K562 (cell line): ENCODE measurements at regions of chr7 and their contacts with region 1.

Region 1: GRCh38 chr7:117146059-117146458 is 176.8 kb downstream of the WNT2 start:
- DNase-seq: peak in 1 of 4 experiments; percentile 17
- ATAC-seq: peak; percentile 51
- H3K4me3 ChIP-seq: no peak overlapping the region
- H3K27ac ChIP-seq: no peak overlapping the region
- H3K4me1 ChIP-seq: no peaks in the 10 kb centered on the region; a peak in 2 of 5 replicates
- H3K27me3 ChIP-seq: no peaks in the 10 kb centered on the region
- CTCF ChIP-seq: no peak
- EP300 ChIP-seq: no peak
- POLR2A ChIP-seq: no peak
- RAD21 ChIP-seq: no peak

Region 2: DNA sequence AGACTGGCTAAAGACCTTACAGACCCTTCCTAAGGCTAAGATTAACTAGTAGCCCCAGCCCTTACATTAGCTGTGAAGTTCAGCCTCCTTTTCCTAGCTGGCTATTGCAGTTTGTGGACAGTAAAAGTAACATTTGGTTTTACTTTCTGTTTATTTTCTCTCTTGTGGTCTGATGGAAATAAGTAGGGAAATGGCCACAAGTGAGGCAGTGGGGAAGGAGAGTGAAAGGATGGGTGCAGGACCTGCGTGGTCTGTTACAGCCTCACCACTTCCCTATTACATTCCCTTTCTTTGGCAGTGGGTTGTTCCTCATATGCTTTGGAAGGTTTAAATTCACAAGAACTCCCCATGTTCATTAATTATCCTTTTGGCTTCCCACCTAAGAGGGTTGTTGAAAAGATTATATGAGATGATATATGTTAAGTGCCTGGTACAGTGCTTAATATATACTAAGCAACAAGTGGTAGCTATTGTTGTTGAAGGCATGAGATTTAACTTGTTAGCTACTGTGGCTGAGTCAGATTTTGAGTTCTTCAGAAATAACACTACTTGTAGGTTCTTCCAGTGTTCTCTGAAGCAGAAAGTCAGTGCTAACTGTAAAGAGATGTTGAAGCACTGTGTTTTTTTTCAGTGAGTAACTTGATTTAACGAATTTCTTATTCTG is 11.0 kb before region 1 on chr7:
- CTCF ChIA-PET with region 1: no interaction called
- POLR2A ChIA-PET with region 1: interaction called, 11 read pairs
- in situ Hi-C with region 1: no loop called
- intact Hi-C with region 1: no loop called
- DNase-seq: no peak
- ATAC-seq: peak; percentile 42; the same call in 1 of the 3 replicates
- H3K4me3 ChIP-seq: no peak overlapping the region
- H3K27ac ChIP-seq: no peak overlapping the region
- H3K4me1 ChIP-seq: no peaks in the 10 kb centered on the region
- H3K27me3 ChIP-seq: no peaks in the 10 kb centered on the region
- CTCF ChIP-seq: no peak
- EP300 ChIP-seq: no peak
- POLR2A ChIP-seq: no peak
- RAD21 ChIP-seq: no peak

Region 3: DNA sequence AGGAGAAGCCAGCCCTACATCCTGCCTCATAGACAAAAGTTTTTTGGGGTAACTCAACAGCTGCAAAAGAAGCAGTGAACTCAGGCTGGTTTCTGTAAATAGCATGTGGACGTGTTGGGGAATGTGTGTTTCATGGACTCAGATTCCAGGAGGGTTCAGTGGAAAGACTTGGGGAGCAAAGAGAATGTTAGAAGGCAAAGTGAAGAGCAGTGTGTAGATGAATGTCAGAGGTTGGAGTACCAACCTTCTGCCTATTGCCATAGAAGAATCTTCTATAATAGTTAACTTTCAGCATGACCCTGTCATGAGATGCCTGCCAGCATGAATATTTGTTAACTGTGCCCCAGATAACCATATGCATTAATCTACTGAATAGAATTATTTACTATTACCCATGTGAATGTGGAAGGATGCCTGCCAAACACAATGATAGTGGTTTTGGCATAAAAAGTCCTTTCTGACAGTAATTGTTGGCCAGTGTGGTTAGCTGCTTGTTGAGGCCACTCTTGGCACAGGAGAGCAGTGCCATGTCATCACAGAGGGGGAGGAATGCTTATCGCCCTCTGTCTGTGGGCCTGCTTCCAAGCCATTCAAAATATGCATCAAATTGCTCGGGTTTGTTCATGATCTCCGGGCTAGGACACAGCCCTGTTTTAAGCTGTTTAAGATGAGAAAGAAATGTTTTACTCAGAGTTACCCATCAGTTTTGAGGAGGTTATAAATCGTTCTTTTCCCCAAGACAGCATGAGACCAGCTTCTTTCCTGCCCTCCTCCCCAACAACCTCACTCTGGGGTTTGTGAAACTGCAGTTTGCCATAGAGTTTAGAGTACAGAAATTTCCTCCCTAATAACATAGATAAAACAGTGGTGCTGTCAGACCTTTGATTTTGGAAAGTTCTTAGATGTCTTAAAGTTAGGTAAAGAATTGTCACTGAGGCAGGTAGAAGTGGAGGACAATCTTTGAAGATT is 11.5 kb after region 1 on chr7:
- CTCF ChIA-PET with region 1: no interaction called
- POLR2A ChIA-PET with region 1: interaction called, 10 read pairs
- in situ Hi-C with region 1: no loop called
- intact Hi-C with region 1: no loop called
- DNase-seq: peak in 2 of 4 experiments; percentile 29 to 36
- ATAC-seq: peak; percentile 78
- H3K4me3 ChIP-seq: no peak overlapping the region
- H3K27ac ChIP-seq: no peak overlapping the region
- H3K4me1 ChIP-seq: no peaks in the 10 kb centered on the region; a peak in 1 of 5 replicates
- H3K27me3 ChIP-seq: no peaks in the 10 kb centered on the region
- CTCF ChIP-seq: peak; percentile 25 to 42 (median 26); a peak in 4 of 6 replicates
- EP300 ChIP-seq: no peak
- POLR2A ChIP-seq: no peak
- RAD21 ChIP-seq: no peak

Region 4: GRCh38 chr7:117323851-117324701 is 178.0 kb after region 1 on chr7:
- CTCF ChIA-PET with region 1: no interaction called
- POLR2A ChIA-PET with region 1: no interaction called
- in situ Hi-C with region 1: no loop called
- intact Hi-C with region 1: no loop called
- DNase-seq: no peak
- ATAC-seq: peak; percentile 52
- H3K4me3 ChIP-seq: no peak overlapping the region
- H3K27ac ChIP-seq: no peak overlapping the region
- H3K4me1 ChIP-seq: peaks cover 0 to 16% of the 10 kb centered on the region in 2 experiments; a peak in 2 of 5 replicates
- H3K27me3 ChIP-seq: peaks cover 43 to 44% of the 10 kb centered on the region in 2 experiments; a peak in 4 of 5 replicates
- CTCF ChIP-seq: no peak
- EP300 ChIP-seq: no peak
- POLR2A ChIP-seq: no peak
- RAD21 ChIP-seq: no peak